ENCODE measurements at regions of chr10 and their contacts with region 1.

Region 1: GRCh38 chr10:28381903-28382347 is 79.1 kb upstream of the MPP7 start:
- DNase-seq: peak; percentile 94
- H3K4me3 ChIP-seq: no peak overlapping the region
- H3K27ac ChIP-seq: no peak overlapping the region
- H3K4me1 ChIP-seq: peaks cover 8% of the 10 kb centered on the region
- CTCF ChIP-seq: peak; percentile 99

Region 2: DNA sequence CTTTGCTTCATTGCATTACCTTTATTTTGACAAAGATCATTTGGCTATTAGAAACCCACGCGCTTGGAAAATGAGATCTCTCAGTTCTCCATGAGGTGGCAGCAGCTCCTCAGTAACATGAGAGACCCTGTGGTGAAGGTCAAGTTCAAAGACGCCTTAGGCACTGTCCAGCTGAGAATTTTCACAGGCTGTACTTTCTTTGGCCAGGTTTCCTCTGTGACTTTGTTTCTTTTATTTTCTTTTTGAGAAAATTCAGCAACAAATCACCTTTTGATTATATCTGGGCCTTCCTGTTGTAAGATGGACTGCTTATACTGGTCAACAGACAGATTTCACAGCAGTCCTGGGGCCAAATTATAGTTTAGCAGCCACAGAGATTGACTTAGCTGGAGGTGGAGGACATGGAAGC is 823.3 kb before region 1 on chr10:
- CTCF ChIA-PET with region 1: no interaction called
- POLR2A ChIA-PET with region 1: no interaction called
- intact Hi-C with region 1: loop called (anchors 2 kb)
- DNase-seq: peak; percentile 68
- H3K4me3 ChIP-seq: no peak overlapping the region
- H3K27ac ChIP-seq: no peak overlapping the region
- H3K4me1 ChIP-seq: no peaks in the 10 kb centered on the region
- CTCF ChIP-seq: peak; percentile 86

Region 3: GRCh38 chr10:27742195-27743011 is 639.5 kb before region 1 on chr10:
- CTCF ChIA-PET with region 1: no interaction called
- POLR2A ChIA-PET with region 1: no interaction called
- intact Hi-C with region 1: loop called (anchors 5 kb)
- DNase-seq: peak; percentile 81
- H3K4me3 ChIP-seq: peak overlapping the region; percentile 66
- H3K27ac ChIP-seq: no peak overlapping the region
- H3K4me1 ChIP-seq: peaks cover 11% of the 10 kb centered on the region
- CTCF ChIP-seq: peak; percentile 81

Region 4: DNA sequence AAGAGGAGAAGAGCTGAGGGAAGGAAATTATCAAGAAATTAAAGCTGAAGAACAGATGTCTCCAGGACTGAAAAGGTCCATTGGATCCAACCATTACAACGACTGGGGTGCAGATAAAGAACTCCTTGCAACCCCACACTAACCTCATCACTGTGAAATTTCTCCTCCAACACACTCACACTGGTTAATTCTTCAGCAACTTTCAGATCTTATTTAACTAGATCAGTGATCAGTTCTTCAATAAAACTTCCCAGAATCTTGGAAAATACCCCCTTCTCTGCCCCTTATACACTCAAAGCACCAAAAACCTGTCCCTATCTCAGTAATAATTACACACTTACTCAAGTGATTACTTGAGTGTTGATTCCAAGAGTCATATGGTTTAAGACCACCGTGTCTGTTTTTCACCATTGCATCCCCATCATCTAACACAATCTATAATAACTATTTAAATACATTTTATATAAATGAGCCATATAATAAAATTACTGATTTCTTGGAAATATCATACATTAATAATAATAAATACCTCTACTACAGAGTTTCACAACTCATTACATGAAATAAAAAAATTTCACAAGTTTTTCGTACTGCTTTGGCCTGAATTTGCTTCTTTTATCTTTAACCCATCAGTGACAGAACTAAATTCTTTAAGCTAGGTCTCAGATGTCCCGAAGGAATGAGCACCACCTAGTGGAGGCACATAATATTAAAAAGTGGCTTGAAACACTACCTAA is 202.8 kb before region 1 on chr10:
- CTCF ChIA-PET with region 1: no interaction called
- POLR2A ChIA-PET with region 1: interaction called, 3 read pairs
- intact Hi-C with region 1: loop called (anchors 2 kb)
- DNase-seq: peak; percentile 66
- H3K4me3 ChIP-seq: no peak overlapping the region
- H3K27ac ChIP-seq: no peak overlapping the region
- H3K4me1 ChIP-seq: peaks cover 36% of the 10 kb centered on the region
- CTCF ChIP-seq: peak; percentile 98

Region 5: DNA sequence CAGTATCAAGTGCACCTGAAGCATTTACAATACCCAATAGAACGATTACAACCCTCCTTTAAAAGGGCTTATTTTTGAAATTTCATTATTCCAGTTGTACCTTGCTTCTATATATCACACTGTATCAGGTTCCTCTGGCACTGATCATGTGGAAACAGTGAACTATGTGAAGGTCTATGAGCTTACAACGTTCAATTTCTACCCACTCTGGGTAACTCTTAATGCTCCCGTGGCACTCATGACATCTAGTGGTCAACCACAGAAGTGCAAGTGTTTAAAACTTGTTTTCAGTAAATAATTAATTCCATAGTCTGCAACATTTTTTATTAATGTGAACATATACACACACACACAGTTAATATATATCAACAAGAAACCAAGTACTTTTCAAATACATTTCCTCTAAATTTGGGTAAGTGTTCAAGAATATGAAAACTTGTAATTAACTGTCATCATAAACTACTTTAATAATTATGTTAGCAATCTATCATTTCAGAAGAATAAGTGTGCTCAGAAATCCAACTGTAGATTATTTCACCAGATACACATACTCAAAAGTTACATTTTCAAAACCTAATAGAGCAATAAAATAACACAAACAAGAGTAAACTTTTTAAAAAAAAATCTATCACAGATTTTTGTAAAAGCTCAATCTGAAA is 140.1 kb before region 1 on chr10:
- CTCF ChIA-PET with region 1: no interaction called
- POLR2A ChIA-PET with region 1: interaction called, 3 read pairs
- intact Hi-C with region 1: loop called (anchors 2 kb)
- DNase-seq: peak; percentile 62
- H3K4me3 ChIP-seq: no peak overlapping the region
- H3K27ac ChIP-seq: no peak overlapping the region
- H3K4me1 ChIP-seq: peaks cover 12% of the 10 kb centered on the region
- CTCF ChIP-seq: peak; percentile 99

Region 6: GRCh38 chr10:28250782-28251181 is 131.1 kb before region 1 on chr10:
- CTCF ChIA-PET with region 1: no interaction called
- POLR2A ChIA-PET with region 1: interaction called, 4 read pairs
- intact Hi-C with region 1: loop called (anchors 1 kb)
- DNase-seq: peak; percentile 44
- H3K4me3 ChIP-seq: no peak overlapping the region
- H3K27ac ChIP-seq: no peak overlapping the region
- H3K4me1 ChIP-seq: no peaks in the 10 kb centered on the region
- CTCF ChIP-seq: peak; percentile 91

Region 7: GRCh38 chr10:28367929-28368484 is 13.9 kb before region 1 on chr10:
- CTCF ChIA-PET with region 1: interaction called, 4 read pairs
- POLR2A ChIA-PET with region 1: interaction called, 10 read pairs
- intact Hi-C with region 1: no loop called
- DNase-seq: peak; percentile 93
- H3K4me3 ChIP-seq: peak overlapping the region; percentile 1
- H3K27ac ChIP-seq: peak overlapping the region; percentile 92
- H3K4me1 ChIP-seq: peaks cover 41% of the 10 kb centered on the region
- CTCF ChIP-seq: no peak

Measured in OCI-LY7 (cell line).